RWPE1 (cell line): ENCODE measurements at regions of chr5 and their contacts with region 1.

Region 1: GRCh38 chr5:178146020-178146820 is 7.5 kb downstream of the NHP2 start:
- DNase-seq: peak; percentile 88
- H3K27ac ChIP-seq: peak overlapping the region; percentile 61
- CTCF ChIP-seq: peak; percentile 96

Region 2: DNA sequence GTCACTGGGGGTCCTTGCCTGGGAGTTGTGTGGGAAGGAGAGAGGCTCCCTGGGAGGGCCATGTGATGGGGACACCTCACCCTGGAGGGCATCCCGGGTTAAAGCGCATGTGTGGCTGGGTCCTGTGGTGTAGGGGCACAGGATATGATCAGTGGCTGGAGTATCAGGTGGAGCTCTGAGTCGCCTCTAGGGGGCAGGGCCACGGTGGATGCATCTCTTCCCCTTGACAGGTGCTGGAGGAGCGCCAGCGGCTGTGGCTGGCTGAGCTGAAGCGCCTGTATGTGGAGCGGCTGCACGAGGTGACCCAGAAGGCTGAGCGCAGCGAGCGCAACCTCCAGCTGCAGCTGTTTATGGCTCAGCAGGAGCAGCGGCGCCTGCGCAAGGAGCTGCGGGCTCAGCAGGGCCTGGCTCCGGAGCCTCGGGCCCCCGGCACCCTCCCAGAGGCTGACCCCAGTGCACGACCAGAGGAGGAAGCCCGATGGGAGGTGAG is 25.3 kb before region 1 on chr5:
- CTCF ChIA-PET with region 1: interaction called, 12 read pairs
- POLR2A ChIA-PET with region 1: no interaction called
- DNase-seq: peak; percentile 53
- H3K27ac ChIP-seq: no peak overlapping the region
- CTCF ChIP-seq: peak; percentile 53

Region 3: DNA sequence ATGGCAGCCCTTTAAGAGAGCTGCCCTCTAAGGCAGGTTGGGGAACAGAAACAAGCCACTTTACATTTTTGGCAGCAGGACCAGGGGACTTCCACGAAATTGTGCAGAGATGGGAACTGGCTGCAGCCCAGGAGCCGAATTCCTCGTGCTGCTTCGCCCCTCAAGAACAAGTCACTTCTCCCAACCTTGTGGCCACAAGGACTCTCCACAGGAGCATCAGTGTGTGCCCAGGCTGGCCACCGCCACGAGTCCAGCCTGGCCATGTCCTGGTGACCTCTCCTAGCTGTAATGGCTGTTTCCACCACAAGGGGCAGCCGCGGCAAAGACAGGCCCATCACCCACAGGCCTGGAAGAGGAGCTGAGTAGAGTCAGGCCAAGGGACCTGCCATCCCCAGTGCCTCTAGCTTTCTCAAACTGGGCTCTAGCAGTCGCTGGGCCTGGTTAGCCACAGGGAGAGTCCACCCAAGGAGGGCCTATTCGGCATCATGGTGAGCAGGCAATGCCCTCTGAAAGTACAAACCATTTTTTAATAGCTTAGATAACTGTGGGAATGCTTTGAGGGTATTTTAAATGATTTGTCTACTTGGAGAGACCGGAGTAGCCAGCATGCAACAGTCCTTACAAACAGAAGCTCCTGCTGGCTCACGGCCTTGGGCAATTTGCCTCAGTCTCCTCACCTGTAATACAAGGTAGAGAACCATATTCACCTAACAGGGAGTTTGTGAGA is 314.9 kb after region 1 on chr5:
- CTCF ChIA-PET with region 1: no interaction called
- POLR2A ChIA-PET with region 1: no interaction called
- DNase-seq: peak; percentile 79
- H3K27ac ChIP-seq: no peak overlapping the region
- CTCF ChIP-seq: peak; percentile 80